ENCODE measurements at regions of chr10 and their contacts with region 1.

Region 1: DNA sequence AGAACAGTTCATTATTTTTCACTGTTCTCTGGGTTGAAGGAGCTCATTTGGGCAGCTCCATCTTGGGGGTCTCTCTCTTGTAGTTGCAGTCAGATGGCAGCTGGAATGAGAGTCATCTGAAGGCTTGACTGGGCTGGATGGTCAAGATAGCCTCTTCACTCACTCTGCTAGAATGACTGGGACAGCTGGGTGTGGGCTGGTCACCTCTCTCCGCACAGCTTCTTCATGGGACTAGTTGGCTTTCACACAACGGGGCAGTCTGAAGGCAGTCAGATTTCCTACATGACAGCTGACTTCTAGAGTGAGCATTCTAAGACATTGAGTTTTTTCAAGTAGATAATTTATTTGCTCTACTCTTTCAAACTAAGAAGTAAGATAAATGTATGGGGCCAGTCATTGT is 13.1 kb downstream of the PLEKHA1 start:
- DNase-seq: no peak
- ATAC-seq: no peak
- H3K4me3 ChIP-seq: no peak overlapping the region
- H3K27ac ChIP-seq: no peak overlapping the region
- H3K4me1 ChIP-seq: no peaks in the 10 kb centered on the region
- H3K27me3 ChIP-seq: no peaks in the 10 kb centered on the region
- CTCF ChIP-seq: no peak
- POLR2A ChIP-seq: no peak
- RAD21 ChIP-seq: no peak

Region 2: GRCh38 chr10:122407375-122408125 is 20.0 kb after region 1 on chr10:
- CTCF ChIA-PET with region 1: no interaction called
- POLR2A ChIA-PET with region 1: no interaction called
- dilution Hi-C with region 1: no loop called
- in situ Hi-C with region 1: no loop called
- intact Hi-C with region 1: loop called (anchors 2 kb)
- DNase-seq: no peak
- ATAC-seq: no peak
- H3K4me3 ChIP-seq: no peak overlapping the region
- H3K27ac ChIP-seq: no peak overlapping the region
- H3K4me1 ChIP-seq: no peaks in the 10 kb centered on the region
- H3K27me3 ChIP-seq: no peaks in the 10 kb centered on the region
- CTCF ChIP-seq: no peak
- POLR2A ChIP-seq: no peak
- RAD21 ChIP-seq: no peak

Measured in IMR-90 (cell line).